WTC11 (cell line): ENCODE measurements at regions of chr22 and their contacts with region 1.

Region 1: GRCh38 chr22:25903294-25903693 is 161.3 kb downstream of the MYO18B start:
- DNase-seq: peak; percentile 85
- ATAC-seq: peak; percentile 94
- H3K4me3 Mint-ChIP-seq: no peak overlapping the region
- H3K27ac Mint-ChIP-seq: 0 out of 2 replicates have a peak overlapping the region, but pooled peaks have one; percentile 43
- H3K4me1 Mint-ChIP-seq: peaks cover 13% of the 10 kb centered on the region
- H3K27me3 Mint-ChIP-seq: peaks cover 3% of the 10 kb centered on the region
- CTCF ChIP-seq: peak; percentile 88

Region 2: GRCh38 chr22:25829808-25830777 is 73.2 kb before region 1 on chr22:
- CTCF ChIA-PET with region 1: no interaction called
- POLR2A ChIA-PET with region 1: no interaction called
- DNase-seq: no peak
- ATAC-seq: no peak
- H3K4me3 Mint-ChIP-seq: no peak overlapping the region
- H3K27ac Mint-ChIP-seq: no peak overlapping the region
- H3K4me1 Mint-ChIP-seq: no peaks in the 10 kb centered on the region
- H3K27me3 Mint-ChIP-seq: no peaks in the 10 kb centered on the region; the same call in 1 of the 2 replicates
- CTCF ChIP-seq: no peak

Region 3: DNA sequence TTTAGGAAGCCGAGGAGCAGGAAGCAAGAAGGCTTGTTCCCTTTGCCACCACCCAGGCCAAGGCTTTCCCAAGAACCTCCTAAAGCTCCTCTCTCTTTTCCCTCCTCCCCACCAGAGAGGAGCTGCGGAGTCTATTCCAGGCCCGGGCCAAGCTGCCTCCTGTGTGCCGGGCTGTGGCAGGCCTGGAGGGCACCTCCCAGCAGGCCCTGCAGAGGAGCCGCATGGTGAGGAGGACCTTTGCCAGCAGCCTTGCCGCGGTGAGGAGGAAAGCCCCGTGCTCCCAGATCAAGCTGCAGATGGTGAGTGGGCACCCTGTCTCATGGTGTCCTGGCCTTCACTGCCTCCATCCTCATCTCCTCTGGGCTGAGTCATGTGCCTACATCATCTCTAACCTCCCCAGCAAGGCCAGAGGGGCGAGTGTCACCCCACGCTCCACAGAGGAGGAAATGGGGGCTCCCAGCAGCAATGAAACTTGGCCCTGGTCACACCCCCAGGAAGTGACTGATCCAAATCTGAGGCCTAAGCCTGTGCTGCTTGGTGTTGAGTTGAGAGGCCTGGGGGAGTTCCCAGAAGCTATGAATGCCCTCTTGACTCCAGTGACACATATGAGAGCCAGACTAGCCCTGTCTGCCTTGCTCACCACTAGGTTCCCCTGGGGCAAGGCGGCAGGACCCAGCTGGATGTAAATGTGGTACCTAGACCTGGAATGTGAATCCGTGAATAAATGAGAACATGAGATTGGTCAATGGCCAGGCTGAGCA is 57.1 kb before region 1 on chr22:
- CTCF ChIA-PET with region 1: interaction called, 10 read pairs
- POLR2A ChIA-PET with region 1: no interaction called
- DNase-seq: no peak
- ATAC-seq: no peak
- H3K4me3 Mint-ChIP-seq: no peak overlapping the region
- H3K27ac Mint-ChIP-seq: no peak overlapping the region
- H3K4me1 Mint-ChIP-seq: no peaks in the 10 kb centered on the region
- H3K27me3 Mint-ChIP-seq: no peaks in the 10 kb centered on the region; the same call in 1 of the 2 replicates
- CTCF ChIP-seq: no peak

Region 4: GRCh38 chr22:25892678-25893077 is 10.6 kb before region 1 on chr22:
- CTCF ChIA-PET with region 1: interaction called, 10 read pairs
- POLR2A ChIA-PET with region 1: no interaction called
- DNase-seq: no peak
- ATAC-seq: peak; percentile 55
- H3K4me3 Mint-ChIP-seq: no peak overlapping the region
- H3K27ac Mint-ChIP-seq: no peak overlapping the region
- H3K4me1 Mint-ChIP-seq: peaks cover 10% of the 10 kb centered on the region
- H3K27me3 Mint-ChIP-seq: peaks cover 4% of the 10 kb centered on the region; the same call in 1 of the 2 replicates
- CTCF ChIP-seq: no peak

Region 5: GRCh38 chr22:25923914-25924313 is 20.6 kb after region 1 on chr22:
- CTCF ChIA-PET with region 1: interaction called, 20 read pairs
- POLR2A ChIA-PET with region 1: no interaction called
- DNase-seq: no peak
- ATAC-seq: no peak
- H3K4me3 Mint-ChIP-seq: no peak overlapping the region
- H3K27ac Mint-ChIP-seq: no peak overlapping the region
- H3K4me1 Mint-ChIP-seq: peaks cover 63% of the 10 kb centered on the region
- H3K27me3 Mint-ChIP-seq: peaks cover 39% of the 10 kb centered on the region
- CTCF ChIP-seq: no peak

Region 6: DNA sequence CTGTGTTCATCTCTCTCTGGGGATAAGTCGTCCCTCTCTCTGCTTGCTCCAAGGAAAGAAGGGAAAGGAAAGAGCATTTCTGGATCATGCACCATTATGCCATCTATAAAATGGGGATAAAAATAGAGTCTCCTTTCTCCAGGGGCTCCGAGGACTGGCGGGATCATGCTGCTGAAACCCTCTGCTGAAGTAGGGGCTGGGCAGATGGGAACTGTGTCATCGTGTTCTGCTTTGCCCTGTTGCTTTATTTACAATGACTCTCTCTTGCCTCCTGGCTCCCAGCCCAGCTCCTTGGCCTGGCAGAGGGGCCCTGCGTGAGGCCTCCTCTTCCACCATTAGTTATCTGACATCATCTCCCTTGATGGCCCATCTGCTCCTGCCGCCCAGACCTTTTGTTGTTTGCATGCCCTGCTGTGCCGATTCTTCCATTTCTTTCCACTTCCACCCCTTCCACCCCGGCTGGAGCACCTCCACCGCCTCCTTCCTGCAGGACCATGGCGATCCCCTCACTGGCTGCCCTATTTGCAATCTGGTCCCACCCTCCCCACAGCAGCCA is 39.6 kb after region 1 on chr22:
- CTCF ChIA-PET with region 1: interaction called, 36 read pairs
- POLR2A ChIA-PET with region 1: no interaction called
- DNase-seq: peak; percentile 30
- ATAC-seq: peak; percentile 73
- H3K4me3 Mint-ChIP-seq: no peak overlapping the region
- H3K27ac Mint-ChIP-seq: peak overlapping the region; percentile 78
- H3K4me1 Mint-ChIP-seq: peaks cover 57% of the 10 kb centered on the region
- H3K27me3 Mint-ChIP-seq: peaks cover 2% of the 10 kb centered on the region
- CTCF ChIP-seq: no peak

Region 7: DNA sequence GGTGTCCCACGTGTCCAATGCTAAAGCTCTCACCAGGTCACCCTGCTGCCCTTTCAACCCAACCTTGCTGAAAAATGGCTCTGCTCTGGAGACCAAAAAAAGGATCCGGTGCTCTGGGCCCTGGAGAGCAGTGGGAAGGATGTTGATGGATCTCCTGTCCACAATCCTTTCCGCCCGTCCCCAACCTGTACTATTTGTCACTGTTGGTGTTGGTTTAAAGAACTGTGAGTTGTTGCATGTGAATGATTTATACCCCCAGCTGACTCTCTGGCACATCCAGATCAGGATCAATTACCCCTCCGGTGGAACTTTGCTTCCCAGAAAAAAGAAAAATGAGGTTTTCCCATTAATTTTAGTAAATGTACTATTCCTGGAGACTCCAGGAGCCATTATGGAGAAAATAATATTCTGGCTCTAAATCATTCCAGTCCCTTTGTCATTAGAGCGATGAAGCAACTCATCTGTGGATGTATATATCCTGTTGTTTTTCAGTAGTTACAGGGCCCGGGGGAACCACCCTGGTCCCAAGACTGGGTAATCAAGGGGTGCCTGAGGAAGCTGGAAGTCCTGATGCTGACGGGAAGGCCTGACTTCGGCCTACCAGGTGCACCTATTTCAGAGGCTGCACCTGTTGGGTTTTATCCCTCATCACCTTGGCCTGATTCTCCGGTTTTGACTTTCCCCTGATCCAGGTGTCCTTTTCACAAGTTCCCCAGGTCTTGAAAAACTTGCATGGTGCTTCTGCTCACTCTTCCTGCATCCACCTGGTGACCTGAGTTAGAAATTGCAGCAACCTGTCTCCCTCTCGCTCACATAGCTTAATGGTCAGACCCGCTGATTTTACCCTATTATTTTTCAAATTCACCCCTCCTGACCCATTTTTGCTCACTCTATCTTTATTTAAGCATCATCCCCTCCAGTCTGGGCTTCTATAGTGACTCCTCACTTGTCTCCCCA is 56.8 kb after region 1 on chr22:
- CTCF ChIA-PET with region 1: interaction called, 40 read pairs
- POLR2A ChIA-PET with region 1: no interaction called
- DNase-seq: no peak
- ATAC-seq: peak; percentile 90
- H3K4me3 Mint-ChIP-seq: no peak overlapping the region
- H3K27ac Mint-ChIP-seq: no peak overlapping the region
- H3K4me1 Mint-ChIP-seq: peaks cover 7% of the 10 kb centered on the region
- H3K27me3 Mint-ChIP-seq: peaks cover 4% of the 10 kb centered on the region; the same call in 1 of the 2 replicates
- CTCF ChIP-seq: no peak